ENCODE measurements at regions of chr20 and their contacts with region 1.

Region 1: GRCh38 chr20:50929299-50930138 is 1.7 kb downstream of the ADNP start:
- DNase-seq: peak; percentile 98 to 99 (median 98)
- H3K4me3 ChIP-seq: peak overlapping the region; percentile 26 to 93 (median 88)
- H3K27ac ChIP-seq: peak overlapping the region; percentile 64 to 79
- H3K4me1 ChIP-seq: peaks cover 18 to 37% (median 27%) of the 10 kb centered on the region in 4 experiments
- H3K27me3 ChIP-seq: no peaks in the 10 kb centered on the region

Region 2: DNA sequence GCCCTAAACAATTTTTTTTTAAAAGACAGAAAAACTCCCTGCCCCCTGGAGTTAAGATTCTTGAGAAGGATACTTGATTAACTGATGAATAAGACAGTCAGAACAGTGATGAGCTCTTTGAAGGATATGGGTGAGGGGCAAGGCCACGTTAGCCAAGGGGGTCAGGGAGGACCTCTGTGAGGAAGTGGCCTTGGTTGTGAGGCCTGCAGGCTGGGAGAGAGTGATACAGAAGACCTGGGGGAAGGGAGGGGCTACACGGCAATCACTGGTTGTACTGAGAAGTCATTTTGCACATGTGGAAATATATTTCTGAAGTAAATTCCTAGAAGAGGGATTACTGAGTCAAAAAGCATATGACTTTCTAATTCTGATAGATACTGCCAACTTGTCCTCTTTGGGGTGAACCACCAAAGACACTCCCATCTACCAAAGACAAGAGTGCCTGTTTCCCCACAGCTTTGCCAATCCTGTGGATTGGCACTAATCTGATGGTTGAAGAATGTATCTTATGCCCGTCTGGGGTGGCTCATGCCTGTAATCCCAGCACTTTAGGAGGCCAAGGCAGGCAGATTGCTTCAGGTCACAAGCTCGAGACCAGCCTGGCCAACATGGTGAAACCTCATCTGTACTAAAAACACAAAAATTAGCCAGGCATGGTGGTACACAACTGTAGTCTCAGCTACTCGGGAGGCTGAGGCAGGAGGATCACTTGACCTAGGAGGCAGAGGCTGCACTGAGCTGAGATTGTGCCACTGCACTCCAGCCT is 156.9 kb before region 1 on chr20:
- CTCF ChIA-PET with region 1: no interaction called
- POLR2A ChIA-PET with region 1: no interaction called
- DNase-seq: no peak
- H3K4me3 ChIP-seq: no peak overlapping the region
- H3K27ac ChIP-seq: no peak overlapping the region
- H3K4me1 ChIP-seq: no peaks in the 10 kb centered on the region
- H3K27me3 ChIP-seq: no peaks in the 10 kb centered on the region

Region 3: GRCh38 chr20:50913690-50914375 is 15.7 kb before region 1 on chr20:
- CTCF ChIA-PET with region 1: interaction called, 44 read pairs
- POLR2A ChIA-PET with region 1: interaction called, 7 read pairs
- DNase-seq: peak in 2 of 3 donors; percentile 43 to 51
- H3K4me3 ChIP-seq: no peak overlapping the region
- H3K27ac ChIP-seq: peak overlapping the region in 1 of 2 experiments; percentile 37
- H3K4me1 ChIP-seq: peaks cover 2 to 19% (median 8%) of the 10 kb centered on the region in 4 experiments
- H3K27me3 ChIP-seq: no peaks in the 10 kb centered on the region

Region 4: DNA sequence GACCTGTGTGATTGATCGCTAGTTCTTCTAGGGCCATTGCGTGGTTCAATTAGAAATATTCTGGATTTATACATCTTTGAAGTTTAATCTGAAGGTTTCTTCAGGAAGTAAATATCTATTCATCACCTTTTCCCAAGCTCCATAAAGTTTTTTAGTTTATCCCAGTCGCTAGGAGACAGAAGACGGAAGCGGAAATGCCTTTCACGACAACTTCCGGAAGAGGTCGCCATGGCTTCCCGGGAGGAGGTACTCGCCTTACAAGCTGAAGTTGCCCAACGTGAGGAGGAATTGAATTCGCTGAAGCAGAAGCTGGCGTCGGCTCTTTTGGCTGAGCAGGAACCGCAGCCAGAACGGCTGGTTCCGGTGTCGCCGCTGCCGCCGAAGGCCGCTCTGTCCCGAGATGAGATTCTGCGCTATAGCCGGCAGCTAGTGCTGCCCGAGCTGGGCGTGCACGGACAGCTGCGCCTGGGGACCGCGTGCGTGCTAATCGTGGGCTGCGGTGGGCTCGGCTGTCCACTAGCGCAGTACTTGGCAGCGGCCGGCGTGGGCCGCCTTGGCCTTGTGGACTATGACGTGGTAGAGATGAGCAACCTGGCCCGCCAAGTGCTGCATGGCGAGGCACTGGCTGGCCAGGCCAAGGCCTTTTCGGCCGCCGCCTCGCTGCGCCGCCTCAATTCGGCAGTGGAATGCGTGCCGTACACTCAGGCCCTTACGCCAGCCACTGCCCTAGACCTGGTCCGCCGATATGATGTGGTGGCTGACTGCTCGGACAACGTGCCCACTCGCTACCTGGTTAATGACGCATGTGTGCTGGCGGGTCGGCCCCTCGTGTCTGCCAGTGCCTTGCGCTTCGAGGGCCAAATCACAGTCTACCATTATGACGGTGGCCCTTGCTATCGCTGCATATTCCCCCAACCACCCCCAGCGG is 29.4 kb after region 1 on chr20 and contains the start of gene MOCS3:
- CTCF ChIA-PET with region 1: interaction called, 4 read pairs
- POLR2A ChIA-PET with region 1: interaction called, 20 read pairs
- DNase-seq: peak; percentile 98 to 99 (median 99)
- H3K4me3 ChIP-seq: peak within 1 kb of the TSS; percentile 83 to 98 (median 94)
- H3K27ac ChIP-seq: peak within 1 kb of the TSS; percentile 100
- H3K4me1 ChIP-seq: peaks cover 9 to 26% (median 24%) of the 10 kb centered on the region in 4 experiments
- H3K27me3 ChIP-seq: no peaks in the 10 kb centered on the region

Region 5: GRCh38 chr20:50969435-50969834 is 39.9 kb after region 1 on chr20:
- CTCF ChIA-PET with region 1: no interaction called
- POLR2A ChIA-PET with region 1: no interaction called
- DNase-seq: no peak
- H3K4me3 ChIP-seq: no peak overlapping the region
- H3K27ac ChIP-seq: no peak overlapping the region
- H3K4me1 ChIP-seq: no peaks in the 10 kb centered on the region
- H3K27me3 ChIP-seq: peaks cover 0 to 11% (median 4%) of the 10 kb centered on the region in 5 experiments

Region 6: DNA sequence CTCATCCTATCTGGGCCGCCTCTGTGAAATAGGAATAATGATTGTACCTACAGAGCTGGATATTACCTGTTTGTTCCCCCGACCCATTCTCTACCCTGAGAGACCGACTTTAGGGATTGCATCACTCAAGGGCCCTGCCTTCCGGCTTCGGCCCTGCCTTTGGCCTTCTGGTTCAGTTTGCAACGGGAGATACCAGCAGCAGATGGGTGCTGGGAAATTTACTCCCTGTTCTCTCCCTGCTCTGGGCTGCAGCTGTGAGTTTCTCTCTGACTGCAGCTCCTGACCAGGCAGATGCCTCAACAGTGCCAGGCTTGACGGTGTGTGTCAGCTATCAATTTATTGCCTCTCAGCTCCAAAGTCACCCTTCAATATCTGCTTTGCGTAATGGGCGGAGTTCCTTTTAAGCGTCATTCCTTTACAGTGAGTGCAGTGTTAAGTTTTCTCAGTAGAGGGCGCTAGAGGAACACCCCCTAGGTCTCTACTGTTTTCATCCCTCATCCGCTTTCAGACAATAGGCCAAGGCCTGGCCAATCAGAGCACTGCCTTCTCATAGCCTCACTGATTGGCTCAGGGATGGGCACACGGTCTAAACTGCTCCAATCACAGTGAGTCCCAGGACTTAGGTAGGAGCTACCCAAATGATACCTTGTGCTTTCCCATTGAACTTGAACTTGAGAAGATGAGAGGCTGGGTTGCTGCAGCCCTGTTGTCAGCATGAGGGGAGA is 63.4 kb after region 1 on chr20:
- CTCF ChIA-PET with region 1: no interaction called
- POLR2A ChIA-PET with region 1: no interaction called
- DNase-seq: peak; percentile 71 to 80 (median 80)
- H3K4me3 ChIP-seq: no peak overlapping the region
- H3K27ac ChIP-seq: no peak overlapping the region
- H3K4me1 ChIP-seq: no peaks in the 10 kb centered on the region
- H3K27me3 ChIP-seq: peaks cover 0 to 21% (median 16%) of the 10 kb centered on the region in 5 experiments

Measured in common myeloid progenitor, CD34-positive (primary cell).